ENCODE measurements at regions of chr12 and their contacts with region 1.

Region 1: GRCh38 chr12:119020406-119021360 is 39.3 kb downstream of the SRRM4 start:
- DNase-seq: peak; percentile 93
- ATAC-seq: peak; percentile 96
- H3K4me3 Mint-ChIP-seq: peak overlapping the region; percentile 53
- H3K27ac Mint-ChIP-seq: no peak overlapping the region
- H3K4me1 Mint-ChIP-seq: peaks cover 38% of the 10 kb centered on the region
- H3K27me3 Mint-ChIP-seq: no peaks in the 10 kb centered on the region
- CTCF ChIP-seq: peak; percentile 85

Region 2: DNA sequence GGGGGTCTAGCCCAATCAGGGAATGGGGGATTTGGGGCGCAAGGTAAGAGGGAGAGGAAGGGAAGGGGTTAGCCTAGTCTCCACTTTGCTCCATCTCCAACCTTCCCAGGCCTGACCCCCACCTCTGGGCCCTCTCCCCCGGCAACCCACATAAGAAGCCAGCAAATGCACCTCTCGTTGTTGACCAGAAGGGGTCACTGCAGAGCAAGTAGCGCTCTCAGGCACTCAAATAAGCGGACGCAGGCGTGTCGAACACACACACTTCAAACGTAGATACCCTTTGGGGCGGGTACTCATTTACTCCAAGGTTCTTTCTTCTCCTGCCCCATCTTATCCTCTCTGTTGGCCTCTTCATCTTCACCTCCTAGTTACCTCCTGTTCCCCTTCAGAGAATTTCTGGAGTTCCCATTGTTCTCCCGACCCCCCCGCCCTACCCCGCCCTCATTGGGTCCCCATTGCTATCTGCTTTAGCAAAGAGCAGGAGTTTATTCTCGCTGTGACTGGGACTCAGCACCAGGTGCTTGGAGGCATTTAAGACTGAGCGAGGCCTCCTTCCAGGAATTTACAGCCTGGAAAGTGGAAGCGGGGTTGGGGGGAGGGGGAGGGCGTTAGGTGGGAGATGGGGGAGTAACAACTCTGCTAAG is 40.8 kb before region 1 on chr12:
- CTCF ChIA-PET with region 1: interaction called, 20 read pairs
- POLR2A ChIA-PET with region 1: no interaction called
- DNase-seq: peak; percentile 77
- ATAC-seq: peak; percentile 60
- H3K4me3 Mint-ChIP-seq: peak overlapping the region; percentile 78
- H3K27ac Mint-ChIP-seq: no peak overlapping the region
- H3K4me1 Mint-ChIP-seq: peaks cover 13% of the 10 kb centered on the region
- H3K27me3 Mint-ChIP-seq: peaks cover 30% of the 10 kb centered on the region
- CTCF ChIP-seq: peak; percentile 72

Region 3: DNA sequence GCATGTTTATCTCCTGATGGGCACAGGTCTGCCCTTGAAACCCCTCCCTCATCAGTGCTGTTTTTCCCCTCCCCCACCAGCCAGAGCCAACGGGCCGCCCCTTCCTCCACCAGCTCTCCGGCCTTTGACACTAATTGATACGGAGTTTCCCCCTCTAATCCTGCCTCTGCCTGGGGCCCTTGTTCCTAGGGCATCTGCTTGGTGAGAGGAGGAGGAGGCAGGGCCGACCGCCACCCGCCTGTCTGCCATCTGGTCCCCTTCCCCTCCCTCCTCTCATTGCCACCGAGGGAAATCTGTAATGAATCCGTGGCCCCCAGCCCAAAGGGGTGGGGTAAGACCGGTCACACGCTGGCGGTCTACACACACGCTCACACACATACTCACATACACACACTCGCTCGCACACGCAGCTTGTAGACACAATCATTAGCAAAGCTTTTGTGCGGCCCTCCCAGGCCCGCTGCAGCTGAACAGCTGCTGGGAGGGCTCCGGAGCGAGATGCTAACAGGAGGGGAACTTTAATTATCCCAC is 11.9 kb before region 1 on chr12:
- CTCF ChIA-PET with region 1: interaction called, 43 read pairs
- POLR2A ChIA-PET with region 1: no interaction called
- DNase-seq: peak; percentile 18
- ATAC-seq: peak; percentile 47
- H3K4me3 Mint-ChIP-seq: peak overlapping the region; percentile 48
- H3K27ac Mint-ChIP-seq: peak overlapping the region; percentile 20; the same call in 1 of the 2 replicates
- H3K4me1 Mint-ChIP-seq: peaks cover 63% of the 10 kb centered on the region
- H3K27me3 Mint-ChIP-seq: no peaks in the 10 kb centered on the region
- CTCF ChIP-seq: no peak

Region 4: GRCh38 chr12:119089380-119090004 is 68.8 kb after region 1 on chr12:
- CTCF ChIA-PET with region 1: interaction called, 20 read pairs
- POLR2A ChIA-PET with region 1: no interaction called
- DNase-seq: peak; percentile 26
- ATAC-seq: peak; percentile 92
- H3K4me3 Mint-ChIP-seq: no peak overlapping the region
- H3K27ac Mint-ChIP-seq: peak overlapping the region; percentile 93
- H3K4me1 Mint-ChIP-seq: peaks cover 59% of the 10 kb centered on the region
- H3K27me3 Mint-ChIP-seq: peaks cover 3% of the 10 kb centered on the region
- CTCF ChIP-seq: no peak

Region 5: DNA sequence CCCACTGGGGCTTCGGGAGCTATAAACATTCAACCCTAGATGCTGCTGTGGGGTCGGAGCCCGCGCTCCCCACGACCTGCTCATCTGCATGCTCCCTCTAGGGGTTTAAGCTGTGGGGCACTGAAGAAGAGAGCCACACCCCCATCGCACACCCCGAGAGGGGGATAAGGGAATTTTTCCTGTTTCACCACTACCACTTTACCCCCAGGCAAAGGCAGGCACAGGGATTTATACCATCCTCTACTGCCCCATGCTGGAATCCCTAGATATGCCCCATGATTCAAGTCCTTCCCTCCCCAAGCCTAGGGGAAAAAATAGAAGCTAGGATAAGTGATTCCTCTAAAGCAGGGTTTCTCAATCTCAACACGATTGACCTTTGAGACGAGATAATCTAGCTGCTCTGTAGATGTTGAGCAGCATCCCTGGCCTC is 254.0 kb after region 1 on chr12:
- CTCF ChIA-PET with region 1: interaction called, 12 read pairs
- POLR2A ChIA-PET with region 1: no interaction called
- DNase-seq: peak; percentile 26
- ATAC-seq: peak; percentile 86
- H3K4me3 Mint-ChIP-seq: no peak overlapping the region
- H3K27ac Mint-ChIP-seq: no peak overlapping the region
- H3K4me1 Mint-ChIP-seq: peaks cover 36% of the 10 kb centered on the region
- H3K27me3 Mint-ChIP-seq: no peaks in the 10 kb centered on the region
- CTCF ChIP-seq: no peak

Measured in WTC11 (cell line).